Right ventricle myocardium inferior (tissue), 1 donor: ENCODE measurements at regions of chr21 and their contacts with region 1.

Region 1: DNA sequence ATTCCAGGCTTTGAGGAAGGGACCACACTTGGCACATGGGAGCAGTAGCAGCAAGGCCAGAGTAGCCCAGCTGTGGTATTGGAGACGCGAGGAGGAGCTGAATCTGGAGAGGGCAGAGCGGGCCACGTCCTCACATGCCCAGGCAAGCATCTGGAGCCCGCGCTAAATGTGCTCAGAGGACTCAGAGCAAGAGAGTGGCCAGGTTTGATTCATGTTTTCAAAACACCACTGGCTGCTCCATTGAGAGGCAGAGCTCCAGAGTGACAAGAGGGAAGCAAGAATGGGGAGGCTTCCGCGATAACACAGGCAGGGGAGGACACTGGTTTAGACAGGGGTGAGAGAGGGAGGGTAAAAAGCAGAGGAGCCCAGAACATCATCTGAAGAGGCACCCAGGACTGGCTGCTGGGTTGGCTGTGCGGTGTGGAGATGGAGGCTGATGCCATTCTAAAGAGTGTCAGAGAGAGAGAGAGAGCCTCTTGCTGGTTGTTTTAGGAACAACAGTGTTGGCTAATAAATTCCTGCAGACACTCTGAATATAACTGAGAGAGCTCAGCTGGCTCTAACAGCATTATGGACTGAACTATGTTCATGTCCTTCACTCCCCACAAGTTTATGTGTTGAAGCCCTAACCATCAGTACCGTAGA is 32.3 kb downstream of the RCAN1 start:
- DNase-seq: peak; percentile 73
- ATAC-seq: peak; percentile 82

Region 2: DNA sequence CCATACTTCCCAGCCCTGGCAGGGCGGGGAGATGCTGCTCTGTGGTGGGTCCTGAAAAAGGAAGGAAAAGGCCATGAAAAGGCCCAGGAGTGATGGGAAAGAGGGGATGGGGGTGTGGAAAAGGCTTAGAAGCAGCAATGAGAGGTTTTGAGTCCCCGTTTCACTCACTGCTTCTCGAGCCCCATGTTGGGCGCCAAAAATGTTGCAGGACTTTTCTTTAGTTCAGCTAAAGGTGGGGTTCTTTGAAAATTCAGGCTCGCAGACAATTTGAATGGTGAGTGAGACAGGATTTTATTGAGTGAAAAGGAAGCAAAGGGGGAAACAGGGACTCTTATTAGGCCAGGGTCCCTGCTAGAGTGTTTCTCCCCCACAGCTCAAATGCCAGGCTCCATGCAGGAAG is 416.2 kb before region 1 on chr21:
- intact Hi-C with region 1: no loop called
- DNase-seq: no peak
- ATAC-seq: no peak

Region 3: GRCh38 chr21:34276711-34277425 is 305.8 kb before region 1 on chr21:
- intact Hi-C with region 1: no loop called
- DNase-seq: no peak
- ATAC-seq: no peak

Region 4: DNA sequence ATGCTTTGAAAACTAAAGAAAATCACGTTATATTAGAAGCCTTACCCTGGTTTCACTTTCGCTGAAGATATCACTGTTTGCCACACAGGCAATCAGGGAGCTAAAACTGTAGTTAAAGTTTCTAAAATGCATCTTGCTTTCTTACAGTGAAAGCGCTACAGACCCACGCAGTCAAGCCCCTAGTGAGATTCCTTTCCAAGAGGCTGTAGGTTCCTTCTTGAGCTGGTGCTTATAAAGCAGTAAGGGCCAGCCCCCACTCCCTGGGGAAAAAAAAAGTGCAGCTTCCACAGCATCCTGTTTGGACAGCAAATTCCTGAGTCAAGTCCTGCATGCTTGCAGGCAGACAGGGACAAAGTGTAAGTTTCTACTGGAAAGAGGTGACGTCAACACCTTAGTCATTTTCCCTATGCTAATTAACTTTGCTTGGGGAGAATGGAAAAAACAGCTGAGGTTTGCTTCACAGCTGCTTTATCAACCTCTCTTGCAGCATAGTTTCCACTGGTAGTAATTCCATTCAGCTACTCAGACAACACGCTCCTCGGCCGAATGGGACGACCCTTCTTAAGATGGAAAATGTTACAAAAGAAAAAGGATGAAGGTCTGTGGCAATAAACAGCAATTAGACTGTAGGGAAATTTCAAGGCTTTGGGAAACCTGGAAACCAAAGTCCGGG is 55.9 kb before region 1 on chr21:
- intact Hi-C with region 1: loop called (anchors 2 kb)
- DNase-seq: peak; percentile 79
- ATAC-seq: peak; percentile 89

Region 5: DNA sequence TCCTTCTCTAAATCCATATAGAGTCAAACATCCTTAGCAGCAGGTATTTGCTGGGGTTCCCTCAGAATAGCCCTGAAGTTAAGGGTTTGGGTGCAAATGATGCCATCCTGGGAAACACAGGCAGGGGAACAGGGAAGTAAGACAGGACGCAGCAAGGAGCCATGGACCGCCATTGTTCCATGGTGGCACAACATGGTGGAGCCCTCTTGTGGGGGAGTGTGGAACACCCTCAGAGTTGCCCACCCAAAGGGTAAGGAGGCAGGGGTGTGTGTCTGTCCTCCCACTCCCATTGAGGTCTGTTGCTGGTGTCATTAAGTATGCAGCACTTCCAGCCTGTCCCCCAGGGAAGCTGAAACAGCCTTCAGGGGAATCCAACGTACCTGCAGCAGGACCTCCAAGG is 52.7 kb after region 1 on chr21:
- intact Hi-C with region 1: no loop called
- DNase-seq: no peak
- ATAC-seq: no peak

Region 6: DNA sequence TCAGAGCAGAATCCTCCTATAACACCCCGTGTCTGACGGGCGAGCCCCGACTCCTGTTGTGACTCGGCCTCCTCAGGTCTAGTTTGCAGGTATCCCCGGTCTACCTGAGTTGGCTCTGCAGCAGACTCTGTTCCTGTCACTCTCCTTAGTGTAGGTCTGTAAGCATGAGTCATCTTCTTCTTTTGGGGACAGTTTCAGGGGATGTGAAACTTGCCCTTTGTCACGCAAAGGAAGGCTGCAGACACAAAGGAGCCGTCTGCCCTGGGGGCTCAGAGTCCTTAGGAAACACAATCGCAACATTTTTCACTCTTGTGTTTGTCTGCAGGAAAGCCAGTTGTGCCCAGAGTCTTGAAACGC is 283.3 kb after region 1 on chr21:
- intact Hi-C with region 1: no loop called
- DNase-seq: no peak
- ATAC-seq: peak; percentile 48